ENCODE measurements at regions of chr5 and their contacts with region 1.

Region 1: DNA sequence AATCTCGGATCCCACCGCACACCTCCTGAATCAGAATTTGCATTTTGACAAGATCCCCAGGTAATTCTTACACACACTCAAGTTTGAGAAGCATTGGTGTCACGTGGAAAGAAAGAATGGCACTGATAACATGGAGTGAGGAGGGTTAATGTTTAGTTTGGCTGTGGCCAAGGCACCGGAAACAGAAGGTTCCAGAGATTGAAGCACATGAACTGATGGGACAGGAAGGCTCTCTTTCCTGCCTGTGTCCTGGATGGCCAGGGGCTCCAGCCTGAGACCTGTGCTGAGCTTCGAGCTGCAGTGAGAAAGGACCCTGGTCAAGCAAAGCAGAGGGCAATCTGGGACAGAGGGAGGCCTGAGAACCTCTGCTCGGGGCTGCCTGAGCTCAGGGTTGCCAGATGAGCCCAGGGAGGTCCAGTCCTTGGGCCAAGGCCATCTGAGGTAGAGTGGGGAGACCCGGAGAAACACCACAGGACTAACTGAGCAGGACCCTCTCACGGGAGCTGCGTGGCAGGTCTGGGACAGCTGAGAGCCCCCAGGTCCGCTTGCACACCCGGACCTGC is 27.3 kb downstream of the AFAP1L1 start:
- DNase-seq: no peak
- H3K4me3 ChIP-seq: no peak overlapping the region
- H3K27ac ChIP-seq: no peak overlapping the region
- H3K4me1 ChIP-seq: peaks cover 0 to 6% (median 2%) of the 10 kb centered on the region in 4 experiments; a peak in 3 of 7 replicates
- H3K27me3 ChIP-seq: no peaks in the 10 kb centered on the region
- CTCF ChIP-seq: no peak
- EP300 ChIP-seq: no peak
- POLR2A ChIP-seq: no peak
- RAD21 ChIP-seq: no peak

Region 2: DNA sequence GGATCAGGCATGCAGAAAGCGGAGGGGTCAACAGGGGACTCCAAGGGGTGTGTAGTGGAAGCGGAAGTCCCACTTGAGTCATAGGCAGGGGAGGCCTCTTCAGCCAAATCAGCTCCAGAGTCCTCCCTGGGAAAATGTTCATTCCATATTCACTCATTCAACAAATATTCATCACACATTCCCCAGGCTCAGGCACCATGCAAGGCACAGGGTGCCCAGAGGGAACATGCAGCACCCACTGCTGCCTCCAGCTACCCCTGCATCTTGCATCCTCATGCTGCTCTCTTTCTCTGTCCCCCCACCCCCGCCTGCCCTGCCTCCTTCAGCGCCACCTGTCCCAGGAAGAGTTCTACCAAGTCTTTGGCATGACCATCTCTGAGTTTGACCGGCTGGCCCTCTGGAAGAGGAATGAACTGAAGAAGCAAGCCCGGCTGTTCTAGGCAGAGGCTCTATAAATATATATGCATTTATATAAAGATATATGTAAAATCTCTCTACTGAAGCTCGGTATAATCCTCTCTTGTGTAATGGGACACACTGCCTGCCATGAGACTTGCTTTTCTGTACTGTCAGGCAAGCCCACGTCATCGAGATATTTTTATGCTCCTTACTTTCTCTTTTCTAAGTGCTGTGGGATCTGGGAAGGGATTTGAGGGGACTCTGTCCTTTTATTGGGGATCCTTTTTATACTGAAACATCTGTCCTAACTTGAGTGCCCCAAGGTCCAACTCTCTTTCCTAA is 40.8 kb before region 1 on chr5:
- CTCF ChIA-PET with region 1: no interaction called
- POLR2A ChIA-PET with region 1: no interaction called
- DNase-seq: no peak
- H3K4me3 ChIP-seq: no peak overlapping the region
- H3K27ac ChIP-seq: no peak overlapping the region
- H3K4me1 ChIP-seq: no peaks in the 10 kb centered on the region; a peak in 1 of 7 replicates
- H3K27me3 ChIP-seq: 0 out of 7 replicates have a peak, but pooled peaks cover 0 to 2% (median 0%) of the 10 kb centered on the region in 4 experiments
- CTCF ChIP-seq: no peak
- EP300 ChIP-seq: no peak
- POLR2A ChIP-seq: no peak
- RAD21 ChIP-seq: no peak

Region 3: DNA sequence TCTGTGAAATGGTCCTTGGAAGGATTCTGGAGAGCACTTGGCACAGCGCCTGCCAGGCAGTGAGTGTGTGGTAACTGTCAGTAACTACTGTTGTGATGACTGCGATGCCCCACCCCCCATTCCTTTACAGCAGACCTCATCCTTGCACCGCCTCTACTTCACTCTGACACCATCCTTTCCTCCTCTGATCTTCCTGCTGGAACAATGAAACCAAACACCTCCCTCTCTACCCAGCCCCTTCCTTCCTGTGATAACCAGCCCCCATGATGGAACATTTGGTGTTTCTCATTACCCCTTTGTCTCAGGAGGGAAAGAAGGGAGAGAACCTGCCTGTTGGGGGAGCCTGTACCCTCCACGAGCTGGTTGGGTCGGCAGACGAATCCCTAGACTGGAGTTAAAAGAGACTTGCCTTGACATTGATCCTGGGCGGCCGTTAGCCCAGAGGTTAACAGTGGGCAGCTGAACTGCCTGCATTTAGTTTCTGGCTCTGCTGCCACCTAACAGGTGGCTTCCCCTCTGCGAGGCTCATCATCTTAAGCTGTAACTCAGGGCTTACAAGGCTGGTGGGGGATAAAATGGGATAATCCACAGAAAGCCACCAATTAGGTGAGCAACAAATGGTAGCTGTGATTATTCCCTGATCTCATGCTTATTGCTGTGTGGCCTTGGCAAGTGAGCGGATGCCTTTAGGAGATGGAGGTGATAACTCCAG is 12.2 kb after region 1 on chr5:
- CTCF ChIA-PET with region 1: interaction called, 10 read pairs
- POLR2A ChIA-PET with region 1: interaction called, 5 read pairs
- DNase-seq: no peak
- H3K4me3 ChIP-seq: no peak overlapping the region
- H3K27ac ChIP-seq: no peak overlapping the region
- H3K4me1 ChIP-seq: peaks cover 0 to 3% (median 1%) of the 10 kb centered on the region in 4 experiments; a peak in 1 of 7 replicates
- H3K27me3 ChIP-seq: no peaks in the 10 kb centered on the region
- CTCF ChIP-seq: peak in 1 of 3 experiments; percentile 13; a peak in 1 of 4 replicates
- EP300 ChIP-seq: no peak
- POLR2A ChIP-seq: no peak
- RAD21 ChIP-seq: no peak

Region 4: GRCh38 chr5:149485655-149486425 is 186.9 kb after region 1 on chr5:
- CTCF ChIA-PET with region 1: no interaction called
- POLR2A ChIA-PET with region 1: no interaction called
- DNase-seq: no peak
- H3K4me3 ChIP-seq: no peak overlapping the region
- H3K27ac ChIP-seq: no peak overlapping the region
- H3K4me1 ChIP-seq: no peaks in the 10 kb centered on the region
- H3K27me3 ChIP-seq: no peaks in the 10 kb centered on the region
- CTCF ChIP-seq: no peak
- EP300 ChIP-seq: no peak
- POLR2A ChIP-seq: no peak
- RAD21 ChIP-seq: no peak

Measured in H1 (cell line).